IMR-90 (cell line): ENCODE measurements at regions of chr3 and their contacts with region 1.

Region 1: GRCh38 chr3:66038726-66039589 is at the start of gene MAGI1:
- DNase-seq: peak; percentile 95
- ATAC-seq: peak; percentile 85
- H3K4me3 ChIP-seq: peak within 1 kb of the TSS; percentile 69
- H3K27ac ChIP-seq: peak within 1 kb of the TSS; percentile 88
- H3K4me1 ChIP-seq: peaks cover 29% of the 10 kb centered on the region
- H3K27me3 ChIP-seq: no peaks in the 10 kb centered on the region
- CTCF ChIP-seq: no peak
- POLR2A ChIP-seq: peak; percentile 58
- RAD21 ChIP-seq: no peak; the same call in 1 of the 2 replicates
- total RNA-seq, gene MAGI1: 24.2 and 26.4 TPM in 2 replicates

Region 2: GRCh38 chr3:65888980-65889706 is 149.8 kb before region 1 on chr3:
- CTCF ChIA-PET with region 1: no interaction called
- POLR2A ChIA-PET with region 1: no interaction called
- dilution Hi-C with region 1: no loop called
- in situ Hi-C with region 1: no loop called
- intact Hi-C with region 1: loop called (anchors 1 kb)
- DNase-seq: peak; percentile 98
- ATAC-seq: peak; percentile 97
- H3K4me3 ChIP-seq: peak overlapping the region; percentile 30; the same call in 1 of the 2 replicates
- H3K27ac ChIP-seq: peak overlapping the region; percentile 57
- H3K4me1 ChIP-seq: peaks cover 11% of the 10 kb centered on the region
- H3K27me3 ChIP-seq: no peaks in the 10 kb centered on the region
- CTCF ChIP-seq: no peak
- POLR2A ChIP-seq: peak; percentile 44; the same call in 1 of the 2 replicates
- RAD21 ChIP-seq: peak; percentile 15; the same call in 1 of the 2 replicates

Region 3: GRCh38 chr3:65953301-65953812 is 85.6 kb before region 1 on chr3:
- CTCF ChIA-PET with region 1: no interaction called
- POLR2A ChIA-PET with region 1: no interaction called
- dilution Hi-C with region 1: no loop called
- in situ Hi-C with region 1: no loop called
- intact Hi-C with region 1: loop called (anchors 5 kb)
- DNase-seq: no peak
- ATAC-seq: no peak
- H3K4me3 ChIP-seq: no peak overlapping the region
- H3K27ac ChIP-seq: no peak overlapping the region
- H3K4me1 ChIP-seq: peaks cover 20% of the 10 kb centered on the region
- H3K27me3 ChIP-seq: no peaks in the 10 kb centered on the region
- CTCF ChIP-seq: no peak
- POLR2A ChIP-seq: no peak
- RAD21 ChIP-seq: no peak

Region 4: GRCh38 chr3:66115858-66116654 is 77.1 kb after region 1 on chr3:
- CTCF ChIA-PET with region 1: no interaction called
- POLR2A ChIA-PET with region 1: no interaction called
- dilution Hi-C with region 1: no loop called
- in situ Hi-C with region 1: no loop called
- intact Hi-C with region 1: loop called (anchors 5 kb)
- DNase-seq: peak; percentile 98
- ATAC-seq: peak; percentile 90
- H3K4me3 ChIP-seq: no peak overlapping the region
- H3K27ac ChIP-seq: peak overlapping the region; percentile 90
- H3K4me1 ChIP-seq: peaks cover 13% of the 10 kb centered on the region
- H3K27me3 ChIP-seq: no peaks in the 10 kb centered on the region
- CTCF ChIP-seq: no peak
- POLR2A ChIP-seq: no peak
- RAD21 ChIP-seq: no peak; the same call in none of the 2 replicates

Region 5: GRCh38 chr3:66195347-66195783 is 156.4 kb after region 1 on chr3:
- CTCF ChIA-PET with region 1: no interaction called
- POLR2A ChIA-PET with region 1: no interaction called
- dilution Hi-C with region 1: no loop called
- in situ Hi-C with region 1: no loop called
- intact Hi-C with region 1: loop called (anchors 1 kb)
- DNase-seq: peak; percentile 68
- ATAC-seq: peak; percentile 98
- H3K4me3 ChIP-seq: peak overlapping the region; percentile 38; the same call in 1 of the 2 replicates
- H3K27ac ChIP-seq: no peak overlapping the region
- H3K4me1 ChIP-seq: no peaks in the 10 kb centered on the region
- H3K27me3 ChIP-seq: peaks cover 3% of the 10 kb centered on the region; the same call in 1 of the 2 replicates
- CTCF ChIP-seq: peak; percentile 52
- POLR2A ChIP-seq: no peak
- RAD21 ChIP-seq: peak; percentile 66

Region 6: DNA sequence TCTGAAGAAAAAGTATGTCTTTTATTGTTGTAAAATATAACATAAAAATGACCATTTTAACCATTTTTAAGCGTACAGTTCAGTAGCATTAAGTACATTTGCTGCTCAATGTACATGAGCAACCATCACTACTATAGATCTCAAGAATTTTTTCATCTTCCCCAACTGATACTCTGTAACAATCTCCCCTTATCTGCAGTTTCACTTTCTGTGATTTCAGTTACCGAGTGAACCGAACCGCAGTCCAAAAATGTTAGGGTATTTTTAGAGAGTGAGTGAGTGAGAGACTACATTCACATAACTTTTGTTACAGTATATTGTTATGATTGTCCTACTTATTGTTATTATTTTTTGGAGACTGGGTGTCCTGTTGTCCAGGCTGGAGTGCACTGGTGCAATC is 172.8 kb after region 1 on chr3:
- CTCF ChIA-PET with region 1: no interaction called
- POLR2A ChIA-PET with region 1: no interaction called
- dilution Hi-C with region 1: no loop called
- in situ Hi-C with region 1: no loop called
- intact Hi-C with region 1: no loop called
- DNase-seq: no peak
- ATAC-seq: no peak
- H3K4me3 ChIP-seq: no peak overlapping the region
- H3K27ac ChIP-seq: no peak overlapping the region
- H3K4me1 ChIP-seq: no peaks in the 10 kb centered on the region
- H3K27me3 ChIP-seq: peaks cover 4% of the 10 kb centered on the region
- CTCF ChIP-seq: no peak
- POLR2A ChIP-seq: no peak
- RAD21 ChIP-seq: no peak